GM10248 (cell line): ENCODE measurements at regions of chr4 and their contacts with region 1.

Region 1: GRCh38 chr4:55395529-55396307 is at the start of gene TMEM165:
- DNase-seq: peak; percentile 95
- CTCF ChIP-seq: no peak

Region 2: DNA sequence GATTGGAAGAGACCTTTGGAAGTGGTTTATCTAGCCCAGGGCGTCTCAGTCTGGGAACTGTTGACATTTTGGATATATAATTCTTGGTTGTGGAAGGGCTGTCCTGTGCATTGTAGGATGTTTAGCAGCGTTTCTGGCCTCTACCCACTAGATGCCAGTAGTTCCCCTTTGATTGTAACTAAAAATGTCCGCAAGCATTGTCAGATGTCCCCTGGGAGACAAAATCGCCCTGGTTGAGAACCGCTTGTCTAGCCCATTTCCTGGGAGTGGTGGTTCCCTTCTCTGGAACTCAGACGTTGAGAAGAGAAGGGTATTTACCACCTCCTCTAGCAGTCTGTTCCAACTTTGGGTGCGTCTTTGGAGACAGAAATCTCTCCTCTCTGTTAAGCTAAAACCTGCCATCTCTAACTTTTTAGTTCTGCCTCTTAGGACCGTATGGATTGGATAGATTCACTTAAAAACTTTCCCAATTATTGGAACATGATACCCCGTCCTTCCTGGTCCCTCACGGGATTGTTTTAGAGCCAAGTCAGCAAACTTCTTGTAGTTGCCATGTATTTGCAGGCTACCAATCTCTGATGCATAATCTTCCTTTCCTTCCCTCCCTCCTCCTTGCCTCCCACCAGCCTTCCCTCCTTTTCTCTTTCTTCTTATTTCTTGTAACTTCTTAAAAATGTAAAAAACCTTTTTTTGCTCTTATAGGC is 13.9 kb after region 1 on chr4:
- CTCF ChIA-PET with region 1: interaction called, 13 read pairs
- POLR2A ChIA-PET with region 1: interaction called, 3 read pairs
- DNase-seq: peak; percentile 25
- CTCF ChIP-seq: peak; percentile 58

Region 3: GRCh38 chr4:55736605-55737183 is 341.0 kb after region 1 on chr4:
- CTCF ChIA-PET with region 1: no interaction called
- POLR2A ChIA-PET with region 1: no interaction called
- DNase-seq: peak; percentile 17
- CTCF ChIP-seq: peak; percentile 18